GM13977 (cell line): ENCODE measurements at regions of chr6 and their contacts with region 1.

Region 1: DNA sequence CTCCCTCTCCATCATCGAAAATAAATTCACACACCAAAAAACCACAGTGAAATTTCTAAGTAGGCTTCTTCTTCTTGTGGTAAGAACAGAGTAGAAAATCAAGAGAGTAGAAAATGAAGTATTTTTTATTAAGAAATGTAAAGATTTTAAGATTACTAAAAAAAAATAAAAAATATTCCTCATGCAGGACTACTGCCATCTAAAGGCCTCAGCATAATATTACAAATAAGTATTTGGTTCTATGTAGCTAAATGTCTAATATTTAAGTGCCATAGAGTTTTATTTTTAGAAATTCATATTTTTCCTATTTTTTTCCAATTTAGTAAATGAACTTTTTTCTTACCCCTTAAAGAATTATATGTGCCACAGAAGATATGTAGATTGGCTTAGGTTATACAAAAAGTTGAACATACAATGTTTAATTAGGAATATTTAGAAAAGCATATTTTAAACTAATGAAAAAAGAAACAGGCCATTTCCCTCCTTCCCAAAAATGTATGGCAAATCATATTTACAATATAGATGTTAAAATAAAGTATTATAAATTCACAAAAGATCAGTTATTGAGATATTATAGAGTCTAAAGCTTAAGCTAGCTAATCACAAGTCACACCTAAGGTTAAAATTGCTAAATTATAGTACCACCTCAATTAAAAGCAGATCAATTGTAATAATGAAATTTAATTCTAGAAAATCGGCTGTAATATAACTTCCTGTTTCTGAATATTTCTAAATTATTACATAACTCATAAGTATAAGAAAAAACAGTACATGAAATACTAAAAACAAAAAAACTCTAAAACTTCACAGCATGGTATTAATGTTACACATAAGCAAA is 3.5 kb upstream of the NT5DC1 start:
- DNase-seq: no peak
- CTCF ChIP-seq: peak; percentile 35

Region 2: DNA sequence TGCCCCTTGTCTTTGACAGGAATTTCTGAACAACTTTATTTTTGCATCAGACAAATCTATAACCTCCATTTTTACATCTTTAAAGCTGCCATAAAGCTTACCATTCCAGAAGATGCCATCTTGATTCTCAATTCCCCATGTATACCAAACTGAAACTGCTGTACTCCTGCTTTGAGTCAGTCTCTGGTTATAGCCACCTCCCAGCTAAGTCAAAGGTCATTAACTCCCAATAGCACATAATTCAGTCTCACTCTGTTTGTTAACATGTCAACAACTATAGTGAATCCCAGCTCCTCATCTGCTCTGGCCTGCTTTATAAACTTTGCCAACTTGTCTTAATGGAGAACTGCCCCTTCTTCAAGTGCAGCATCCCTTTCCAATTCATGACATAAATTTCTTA is 380.1 kb before region 1 on chr6:
- in situ Hi-C with region 1: no loop called
- DNase-seq: no peak
- CTCF ChIP-seq: no peak

Region 3: GRCh38 chr6:116010790-116011401 is 86.3 kb before region 1 on chr6:
- in situ Hi-C with region 1: loop called (anchors 5 kb)
- DNase-seq: peak; percentile 11
- CTCF ChIP-seq: peak; percentile 87